GM13976 (cell line): ENCODE measurements at regions of chr3 and their contacts with region 1.

Region 1: DNA sequence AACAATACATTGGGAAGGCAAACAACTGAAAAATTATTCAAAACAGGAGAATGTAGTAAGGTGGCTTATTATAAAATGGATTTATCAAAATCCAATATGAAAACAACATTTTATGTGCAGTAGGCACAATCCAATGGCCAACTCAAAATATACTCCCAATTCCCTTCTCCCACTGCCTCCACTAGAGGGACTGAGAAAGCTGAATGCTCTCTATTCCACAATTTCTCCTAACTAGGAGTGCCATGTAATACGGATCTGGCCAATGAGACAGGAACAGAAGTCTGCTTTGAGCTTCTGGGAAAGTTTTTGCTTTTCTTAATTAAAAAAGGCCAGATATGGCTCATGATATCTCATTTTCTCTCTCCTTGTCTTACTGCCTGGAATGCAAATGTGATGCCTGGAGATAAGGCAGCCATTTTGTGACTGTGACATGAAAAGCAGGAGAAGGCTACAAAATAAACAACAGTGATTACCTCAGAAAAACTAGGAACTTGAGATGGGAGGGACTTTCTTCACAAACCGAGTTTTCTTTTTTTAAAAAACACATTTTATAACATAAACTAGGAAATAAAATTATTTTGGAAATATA is 18.8 kb upstream of the VGLL4 start:
- DNase-seq: no peak
- CTCF ChIP-seq: no peak

Region 2: GRCh38 chr3:11379824-11380701 is 282.4 kb before region 1 on chr3:
- in situ Hi-C with region 1: loop called (anchors 5 kb)
- DNase-seq: no peak
- CTCF ChIP-seq: no peak

Region 3: GRCh38 chr3:11791339-11792128 is 129.0 kb after region 1 on chr3:
- in situ Hi-C with region 1: no loop called
- DNase-seq: no peak
- CTCF ChIP-seq: no peak